Sigmoid colon (tissue), 7 donors: ENCODE measurements at regions of chr15 and their contacts with region 1.

Region 1: GRCh38 chr15:51380999-51381795 is 39.7 kb downstream of the GLDN start:
- DNase-seq: peak; percentile 72
- H3K4me3 ChIP-seq: no peak overlapping the region
- H3K27ac ChIP-seq: no peak overlapping the region
- H3K4me1 ChIP-seq: peaks cover 0 to 4% (median 0%) of the 10 kb centered on the region in 4 donors
- H3K27me3 ChIP-seq: no peaks in the 10 kb centered on the region
- CTCF ChIP-seq: peak; percentile 71 to 96 (median 80)
- EP300 ChIP-seq: no peak
- POLR2A ChIP-seq: no peak

Region 2: DNA sequence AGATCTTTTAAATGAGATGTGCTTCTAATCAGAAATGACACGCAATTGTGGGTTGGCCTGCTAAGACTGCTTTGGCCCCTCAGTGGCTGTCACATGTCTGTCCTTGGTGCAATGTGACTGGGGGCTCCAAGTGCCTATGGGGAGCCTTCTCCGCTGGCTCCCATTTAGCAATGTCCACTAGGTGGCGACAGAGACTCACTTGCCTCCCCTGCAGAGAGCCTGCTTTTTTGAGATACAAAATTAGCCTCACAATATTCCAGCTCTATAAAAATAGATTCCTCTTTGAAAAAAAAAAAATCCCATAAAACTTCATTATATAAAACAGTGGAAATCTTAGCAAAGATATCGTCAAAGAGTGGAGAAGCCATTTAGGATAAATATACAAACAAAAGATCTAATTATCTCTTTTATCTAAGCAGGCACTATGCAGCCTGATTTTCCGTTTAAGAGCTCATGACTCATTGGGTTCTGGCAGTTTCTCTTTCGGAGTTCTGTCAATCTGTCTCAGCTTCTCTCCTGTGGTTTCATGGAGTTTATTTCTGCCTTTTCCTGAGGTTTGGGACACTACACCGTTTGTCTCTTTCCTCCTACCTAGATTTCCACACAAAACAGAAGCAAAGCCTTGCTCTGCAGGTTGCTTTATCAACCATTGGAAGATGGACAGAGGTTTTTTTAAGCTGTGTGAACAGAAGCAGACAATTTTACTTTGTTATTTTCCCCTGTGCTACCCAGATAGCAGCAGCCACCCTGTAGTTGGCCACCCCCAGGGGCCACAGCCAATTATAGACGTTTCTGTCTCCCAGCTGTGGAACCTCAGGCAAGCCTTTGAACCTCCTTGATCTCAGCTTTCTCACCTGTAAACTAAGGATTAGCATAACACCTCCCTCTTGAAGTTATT is 218.1 kb before region 1 on chr15:
- intact Hi-C with region 1: loop called (anchors 5 kb)
- DNase-seq: peak; percentile 77
- H3K4me3 ChIP-seq: peak overlapping the region in 3 of 4 donors; percentile 5 to 10 (median 8)
- H3K27ac ChIP-seq: peak overlapping the region in 2 of 4 donors; percentile 14 to 32
- H3K4me1 ChIP-seq: peaks cover 0 to 10% (median 8%) of the 10 kb centered on the region in 4 donors
- H3K27me3 ChIP-seq: no peaks in the 10 kb centered on the region
- CTCF ChIP-seq: peak; percentile 54 to 98 (median 81)
- EP300 ChIP-seq: no peak
- POLR2A ChIP-seq: no peak

Region 3: GRCh38 chr15:51281368-51281967 is 99.7 kb before region 1 on chr15:
- intact Hi-C with region 1: loop called (anchors 1 kb)
- DNase-seq: peak; percentile 78
- H3K4me3 ChIP-seq: no peak overlapping the region
- H3K27ac ChIP-seq: no peak overlapping the region
- H3K4me1 ChIP-seq: no peaks in the 10 kb centered on the region
- H3K27me3 ChIP-seq: no peaks in the 10 kb centered on the region
- CTCF ChIP-seq: peak; percentile 7 to 61 (median 32)
- EP300 ChIP-seq: no peak
- POLR2A ChIP-seq: no peak

Region 4: GRCh38 chr15:51814606-51815005 is 433.4 kb after region 1 on chr15:
- intact Hi-C with region 1: no loop called
- DNase-seq: no peak
- H3K4me3 ChIP-seq: no peak overlapping the region
- H3K27ac ChIP-seq: no peak overlapping the region
- H3K4me1 ChIP-seq: no peaks in the 10 kb centered on the region
- H3K27me3 ChIP-seq: no peaks in the 10 kb centered on the region
- CTCF ChIP-seq: no peak
- EP300 ChIP-seq: no peak
- POLR2A ChIP-seq: no peak